Endothelial cell of umbilical vein (primary cell): ENCODE measurements at regions of chr3 and their contacts with region 1.

Region 1: GRCh38 chr3:160941885-160942494 is 163.2 kb downstream of the B3GALNT1 start:
- DNase-seq: peak; percentile 85
- H3K4me3 ChIP-seq: no peak overlapping the region
- H3K27ac ChIP-seq: no peak overlapping the region
- H3K4me1 ChIP-seq: no peaks in the 10 kb centered on the region
- H3K27me3 ChIP-seq: no peaks in the 10 kb centered on the region
- CTCF ChIP-seq: peak; percentile 57 to 62
- POLR2A ChIP-seq: no peak

Region 2: DNA sequence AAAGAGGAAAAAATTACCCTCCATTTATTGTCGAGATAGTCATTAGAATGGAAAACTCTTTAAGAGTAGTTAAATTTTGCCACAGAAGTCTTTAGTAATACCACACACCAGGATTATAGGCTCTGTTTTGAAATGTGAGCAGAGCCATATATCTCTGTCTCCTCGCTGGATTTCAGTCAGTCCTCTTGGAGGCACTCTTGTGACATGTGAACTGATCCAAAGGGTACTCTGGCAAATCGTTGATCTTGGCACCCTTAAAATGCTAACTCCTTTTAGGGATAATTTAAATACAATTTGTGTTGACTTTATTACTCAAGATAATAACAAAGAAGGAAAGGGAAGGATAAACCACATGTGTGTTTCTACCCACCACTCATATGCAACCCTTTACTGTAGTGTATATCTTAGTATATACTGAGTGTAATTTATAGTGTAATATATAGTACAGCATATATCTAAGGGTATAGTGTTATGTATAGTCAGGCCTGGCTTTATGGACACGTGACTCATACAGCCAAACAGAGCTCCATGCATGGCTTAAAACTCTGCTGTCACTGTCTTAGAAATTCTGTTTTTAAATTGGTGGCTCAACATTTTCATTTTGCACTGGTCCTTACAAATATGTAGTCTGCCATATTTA is 364.3 kb before region 1 on chr3:
- CTCF ChIA-PET with region 1: no interaction called
- POLR2A ChIA-PET with region 1: no interaction called
- dilution Hi-C with region 1: no loop called
- intact Hi-C with region 1: loop called (anchors 1 kb)
- DNase-seq: peak; percentile 22
- H3K4me3 ChIP-seq: no peak overlapping the region
- H3K27ac ChIP-seq: no peak overlapping the region
- H3K4me1 ChIP-seq: no peaks in the 10 kb centered on the region
- H3K27me3 ChIP-seq: peaks cover 0 to 4% of the 10 kb centered on the region in 2 experiments
- CTCF ChIP-seq: peak in 1 of 2 donors; percentile 4
- POLR2A ChIP-seq: no peak

Region 3: GRCh38 chr3:160707187-160707794 is 234.7 kb before region 1 on chr3:
- CTCF ChIA-PET with region 1: interaction called, 31 read pairs
- POLR2A ChIA-PET with region 1: no interaction called
- dilution Hi-C with region 1: no loop called
- intact Hi-C with region 1: loop called (anchors 1 kb)
- DNase-seq: peak; percentile 43
- H3K4me3 ChIP-seq: no peak overlapping the region
- H3K27ac ChIP-seq: no peak overlapping the region
- H3K4me1 ChIP-seq: no peaks in the 10 kb centered on the region
- H3K27me3 ChIP-seq: peaks cover 2 to 7% of the 10 kb centered on the region in 2 experiments
- CTCF ChIP-seq: peak; percentile 14 to 36
- POLR2A ChIP-seq: no peak

Region 4: GRCh38 chr3:160921020-160921635 is 20.9 kb before region 1 on chr3:
- CTCF ChIA-PET with region 1: interaction called, 20 read pairs
- POLR2A ChIA-PET with region 1: no interaction called
- dilution Hi-C with region 1: no loop called
- intact Hi-C with region 1: loop called (anchors 1 kb)
- DNase-seq: peak; percentile 55
- H3K4me3 ChIP-seq: no peak overlapping the region
- H3K27ac ChIP-seq: no peak overlapping the region
- H3K4me1 ChIP-seq: no peaks in the 10 kb centered on the region
- H3K27me3 ChIP-seq: no peaks in the 10 kb centered on the region
- CTCF ChIP-seq: peak; percentile 75 to 77
- POLR2A ChIP-seq: no peak

Region 5: DNA sequence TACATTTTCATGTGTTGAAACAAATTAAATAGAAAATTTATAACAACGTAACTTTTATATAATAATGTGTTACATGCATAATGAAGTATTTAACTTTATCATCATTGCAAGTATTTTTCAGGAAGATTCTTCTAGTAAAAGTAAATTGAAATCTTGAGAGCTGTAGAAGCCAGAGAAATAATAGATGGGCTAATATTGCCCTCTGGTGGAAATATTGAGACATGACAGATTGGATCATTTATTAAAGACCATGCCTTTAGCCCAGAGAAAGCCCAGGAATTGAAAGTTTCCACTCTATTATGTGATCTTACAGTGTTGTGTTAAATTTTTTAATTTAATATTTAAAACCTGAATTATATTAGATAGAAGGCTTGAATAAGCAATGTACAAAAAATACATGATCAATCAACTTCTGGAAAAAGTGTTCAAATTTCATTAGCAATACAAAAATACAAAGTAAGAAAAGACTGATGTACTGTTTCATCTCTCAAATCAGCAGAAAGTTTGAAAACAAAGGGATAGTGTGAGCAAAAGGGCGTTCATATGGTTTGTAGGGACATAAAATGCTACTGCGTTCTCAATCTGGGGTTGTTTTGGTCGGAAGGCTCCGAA is 482.0 kb after region 1 on chr3:
- CTCF ChIA-PET with region 1: interaction called, 3 read pairs
- POLR2A ChIA-PET with region 1: no interaction called
- dilution Hi-C with region 1: no loop called
- intact Hi-C with region 1: loop called (anchors 5 kb)
- DNase-seq: peak; percentile 44
- H3K4me3 ChIP-seq: no peak overlapping the region
- H3K27ac ChIP-seq: no peak overlapping the region
- H3K4me1 ChIP-seq: peaks cover 5% of the 10 kb centered on the region
- H3K27me3 ChIP-seq: peaks cover 1 to 5% of the 10 kb centered on the region in 2 experiments
- CTCF ChIP-seq: peak in 1 of 2 donors; percentile 40
- POLR2A ChIP-seq: no peak